ENCODE measurements at regions of chr4 and their contacts with region 1.

Region 1: GRCh38 chr4:151325111-151325948 is at the start of gene SH3D19:
- DNase-seq: peak; percentile 80
- total RNA-seq, gene SH3D19: 142 TPM

Region 2: DNA sequence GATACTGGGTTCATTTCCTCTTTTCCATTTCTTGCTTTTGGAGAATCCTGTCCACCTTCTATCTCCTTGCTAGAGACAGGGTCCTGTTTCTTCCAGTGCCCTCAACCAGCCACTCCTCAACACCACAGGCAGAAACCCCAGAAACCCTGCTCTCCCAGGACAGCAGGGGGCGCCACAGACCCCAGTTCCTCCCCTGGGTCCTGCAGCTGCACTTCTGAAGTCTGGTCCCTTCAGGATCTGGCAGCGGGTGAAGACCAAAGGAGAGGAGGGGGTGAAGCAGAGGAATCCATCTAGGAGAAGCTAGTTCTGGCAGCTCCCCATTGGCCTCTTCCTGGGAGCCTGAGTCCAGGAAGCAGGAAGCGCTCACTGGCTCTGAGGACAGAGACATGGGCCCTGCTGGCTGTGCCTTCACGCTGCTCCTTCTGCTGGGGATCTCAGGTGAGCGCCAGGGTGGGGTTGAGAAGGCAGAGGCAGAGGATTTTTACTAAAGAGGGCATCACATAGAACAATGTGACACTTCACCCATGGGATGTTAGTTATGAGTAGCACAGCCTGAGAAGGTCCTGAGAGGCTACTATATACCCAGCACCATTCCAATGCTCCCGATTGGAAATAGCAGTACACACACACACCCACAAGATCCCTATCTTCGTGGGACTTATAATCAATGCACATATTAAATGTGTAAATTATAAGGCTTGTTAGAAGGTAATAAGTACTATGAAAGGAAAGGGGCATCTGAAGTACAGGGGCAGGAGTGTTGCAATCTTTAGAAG is 48.4 kb before region 1 on chr4 and contains the start of gene PRSS48:
- intact Hi-C with region 1: loop called (anchors 5 kb)
- DNase-seq: peak; percentile 78
- total RNA-seq, gene PRSS48: not detected

Region 3: GRCh38 chr4:151291485-151291884 is 33.8 kb before region 1 on chr4:
- intact Hi-C with region 1: no loop called
- DNase-seq: no peak